ENCODE measurements at regions of chr17 and their contacts with region 1.

Region 1: GRCh38 chr17:4966844-4967538 is 626 bp downstream of the SPAG7 start:
- DNase-seq: peak; percentile 99

Region 2: GRCh38 chr17:4908301-4908700 is 58.7 kb before region 1 on chr17:
- intact Hi-C with region 1: loop called (anchors 5 kb)
- DNase-seq: no peak

Region 3: GRCh38 chr17:4939796-4940624 is 27.0 kb before region 1 on chr17 and contains the starts of genes RNF167 and SLC25A11:
- intact Hi-C with region 1: loop called (anchors 1 kb)
- DNase-seq: peak; percentile 97
- total RNA-seq, gene RNF167: 84.7 TPM
- total RNA-seq, gene SLC25A11: 176 TPM

Region 4: GRCh38 chr17:4948931-4949320 is 18.1 kb before region 1 on chr17:
- intact Hi-C with region 1: loop called (anchors 1 kb)
- DNase-seq: peak; percentile 89

Region 5: GRCh38 chr17:4986951-4987766 is 20.2 kb after region 1 on chr17 and contains the start of gene CAMTA2:
- intact Hi-C with region 1: loop called (anchors 2 kb)
- DNase-seq: peak; percentile 96
- total RNA-seq, gene CAMTA2: 38.9 TPM

Region 6: DNA sequence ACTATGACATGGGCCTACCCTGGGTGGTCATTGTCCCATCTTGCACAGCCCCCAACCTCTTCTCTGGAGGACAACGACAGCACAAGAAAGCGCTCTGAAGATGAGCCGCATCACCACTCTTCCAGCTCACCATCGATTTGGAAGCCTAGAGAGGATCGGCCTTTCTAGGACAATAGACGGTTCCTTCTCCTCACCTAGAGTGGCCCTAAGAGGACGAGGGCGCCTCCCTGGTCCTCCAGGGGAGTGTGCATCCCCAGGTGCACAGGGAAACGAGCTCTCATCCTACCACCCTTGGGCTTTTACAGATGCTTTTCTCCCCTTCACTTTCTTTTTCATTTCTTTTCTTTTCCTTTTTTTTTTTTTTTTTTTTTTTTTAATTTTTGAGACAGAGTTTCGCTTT is 88.6 kb after region 1 on chr17:
- intact Hi-C with region 1: loop called (anchors 5 kb)
- DNase-seq: no peak

Measured in cardiac septum (tissue), 1 donor.